ENCODE measurements at regions of chr19 and their contacts with region 1.

Region 1: GRCh38 chr19:11814029-11814699 is at the start of gene ZNF440:
- H3K4me3 Mint-ChIP-seq: peak within 1 kb of the TSS; percentile 90
- H3K27ac Mint-ChIP-seq: peak within 1 kb of the TSS; percentile 92
- H3K4me1 Mint-ChIP-seq: peaks cover 23% of the 10 kb centered on the region
- H3K27me3 Mint-ChIP-seq: no peaks in the 10 kb centered on the region

Region 2: DNA sequence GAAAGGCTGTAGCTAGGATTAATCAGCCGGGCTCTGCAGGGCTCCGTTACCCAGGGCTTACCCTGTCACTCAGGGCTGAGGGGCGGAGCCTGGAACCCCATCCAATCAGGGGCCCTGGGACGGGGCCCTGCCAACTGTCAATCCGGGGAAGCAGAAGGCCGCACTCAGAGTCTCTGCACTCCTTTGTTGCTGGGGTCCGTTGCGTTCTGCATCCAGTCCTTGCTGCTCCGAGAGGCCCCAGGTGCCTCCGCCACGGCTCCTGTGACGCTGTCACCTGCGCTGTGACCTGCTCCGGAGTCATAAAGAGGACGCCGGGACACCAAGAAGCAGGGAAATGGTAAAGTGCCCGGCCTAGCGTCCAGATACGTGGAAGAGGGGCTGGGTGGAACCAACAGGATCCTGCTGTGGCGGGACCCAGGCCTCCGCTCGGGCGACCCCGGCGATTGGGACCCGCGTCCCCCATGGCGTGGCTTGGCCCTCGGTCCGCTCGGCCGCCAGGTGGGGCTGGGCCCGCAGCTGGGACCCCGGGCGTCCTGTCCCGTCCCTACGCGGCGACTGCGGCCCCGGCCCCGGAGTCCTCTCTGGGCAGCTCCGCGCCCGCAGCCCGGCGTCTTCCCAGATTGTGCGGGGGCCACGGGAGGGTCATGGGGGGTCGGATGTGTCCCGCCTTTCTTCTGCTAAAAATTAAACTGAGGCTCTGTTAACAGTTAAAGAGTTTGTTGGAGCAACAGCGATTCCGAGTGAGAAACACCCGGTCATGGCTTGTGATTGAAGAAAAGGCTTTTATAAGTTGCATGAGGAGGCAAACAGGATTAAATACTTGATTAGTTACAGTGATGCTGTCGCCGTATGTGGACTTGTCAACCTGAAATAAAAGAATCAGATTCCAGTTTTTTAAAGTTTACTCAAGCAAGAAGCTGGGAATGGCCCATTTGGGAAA is 15.5 kb before region 1 on chr19 and contains the start of gene ZNF491:
- intact Hi-C with region 1: loop called (anchors 2 kb)
- H3K4me3 Mint-ChIP-seq: peak within 1 kb of the TSS; percentile 99
- H3K27ac Mint-ChIP-seq: peak within 1 kb of the TSS; percentile 74
- H3K4me1 Mint-ChIP-seq: peaks cover 14% of the 10 kb centered on the region
- H3K27me3 Mint-ChIP-seq: peaks cover 3% of the 10 kb centered on the region

Region 3: GRCh38 chr19:11848594-11849469 is 34.7 kb after region 1 on chr19 and contains the start of gene ZNF439:
- intact Hi-C with region 1: loop called (anchors 1 kb)
- H3K4me3 Mint-ChIP-seq: peak within 1 kb of the TSS; percentile 71
- H3K27ac Mint-ChIP-seq: peak within 1 kb of the TSS; percentile 58
- H3K4me1 Mint-ChIP-seq: peaks cover 15% of the 10 kb centered on the region
- H3K27me3 Mint-ChIP-seq: no peaks in the 10 kb centered on the region

Measured in dendritic cell treated with granulocyte-macrophage colony-stimulating factor and Interleukin-4, amounts not matched to agents 40 ng/mL and 50 ng/mL, for 4 days (primary cell).